ENCODE measurements at regions of chrX and their contacts with region 1.

Region 1: DNA sequence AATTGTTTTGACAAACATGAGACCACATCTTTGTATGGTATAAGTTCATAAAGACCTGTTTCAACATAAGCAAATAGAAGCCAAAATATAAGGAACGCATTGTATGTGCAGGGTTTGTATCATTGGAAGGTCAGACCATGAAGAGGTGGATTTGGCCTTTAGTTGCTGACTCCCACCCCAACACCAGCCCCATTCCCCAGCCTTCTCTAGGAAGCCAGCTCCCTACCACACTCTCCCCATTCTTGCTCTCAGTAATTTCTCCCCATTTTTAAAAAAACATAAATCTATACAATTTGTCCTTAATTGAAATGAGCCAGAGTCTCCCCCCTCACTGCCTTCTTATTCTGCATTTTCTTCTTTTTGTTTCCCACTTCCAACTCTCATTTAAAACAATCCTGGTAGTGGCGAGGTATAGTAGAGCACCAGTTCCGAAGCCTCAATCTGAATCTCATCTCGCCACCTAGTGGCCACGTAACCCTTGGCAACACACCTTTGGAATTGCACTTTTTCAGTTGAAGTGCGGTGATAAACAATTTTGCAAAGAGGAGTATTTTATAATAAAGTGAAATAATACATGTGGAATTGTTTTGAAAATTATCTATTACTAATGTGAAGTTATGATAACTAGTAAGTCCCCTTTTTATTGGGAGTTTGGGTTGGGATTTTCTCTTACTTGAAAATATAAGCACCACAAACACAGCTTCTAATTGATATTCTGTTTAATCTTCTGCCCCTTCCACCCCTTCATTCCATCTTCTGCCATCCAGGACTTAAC is 126.6 kb downstream of the ASB9 start:
- DNase-seq: peak in 1 of 2 experiments; percentile 47
- H3K4me3 ChIP-seq: no peak overlapping the region
- H3K27ac ChIP-seq: no peak overlapping the region
- H3K4me1 ChIP-seq: no peaks in the 10 kb centered on the region
- H3K27me3 ChIP-seq: no peaks in the 10 kb centered on the region
- CTCF ChIP-seq: peak; percentile 41 to 62 (median 54)
- EP300 ChIP-seq: no peak
- POLR2A ChIP-seq: no peak
- RAD21 ChIP-seq: peak; percentile 69

Region 2: DNA sequence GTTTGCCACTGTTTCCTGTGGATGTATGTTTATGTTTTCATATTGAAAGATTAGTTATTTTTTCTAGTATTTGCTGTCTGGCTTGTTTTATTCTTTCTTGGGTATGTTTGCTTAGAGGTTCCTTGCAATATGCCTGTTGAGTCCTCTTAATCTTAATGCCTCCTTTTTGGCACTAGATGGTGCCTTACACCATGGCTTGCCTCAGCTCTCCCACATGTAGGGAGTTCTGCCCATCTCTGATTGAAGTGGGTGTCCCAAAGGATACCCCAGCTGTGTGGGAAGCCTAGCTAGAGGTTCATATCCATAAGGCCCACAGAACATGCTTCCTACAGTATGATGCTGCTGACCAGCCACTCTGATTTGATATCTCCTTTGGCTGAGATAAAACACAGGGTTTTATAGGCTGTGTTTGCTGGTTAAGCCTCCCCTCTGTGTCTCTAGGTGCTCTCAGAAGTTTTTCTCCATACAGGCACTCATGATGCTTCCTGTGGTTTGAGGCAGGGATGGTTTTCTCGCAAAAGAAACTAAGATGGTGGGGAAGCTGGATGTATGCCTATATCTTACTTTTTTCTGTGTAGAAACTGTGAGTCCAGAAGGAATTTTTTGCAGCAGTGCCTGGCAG is 35.8 kb before region 1 on chrX:
- CTCF ChIA-PET with region 1: interaction called, 13 read pairs
- POLR2A ChIA-PET with region 1: no interaction called
- DNase-seq: no peak
- H3K4me3 ChIP-seq: no peak overlapping the region
- H3K27ac ChIP-seq: no peak overlapping the region
- H3K4me1 ChIP-seq: no peaks in the 10 kb centered on the region
- H3K27me3 ChIP-seq: no peaks in the 10 kb centered on the region
- CTCF ChIP-seq: peak in 2 of 3 experiments; percentile 26 to 29; a peak in 2 of 4 replicates
- EP300 ChIP-seq: no peak
- POLR2A ChIP-seq: no peak
- RAD21 ChIP-seq: peak; percentile 49 to 66

Region 3: DNA sequence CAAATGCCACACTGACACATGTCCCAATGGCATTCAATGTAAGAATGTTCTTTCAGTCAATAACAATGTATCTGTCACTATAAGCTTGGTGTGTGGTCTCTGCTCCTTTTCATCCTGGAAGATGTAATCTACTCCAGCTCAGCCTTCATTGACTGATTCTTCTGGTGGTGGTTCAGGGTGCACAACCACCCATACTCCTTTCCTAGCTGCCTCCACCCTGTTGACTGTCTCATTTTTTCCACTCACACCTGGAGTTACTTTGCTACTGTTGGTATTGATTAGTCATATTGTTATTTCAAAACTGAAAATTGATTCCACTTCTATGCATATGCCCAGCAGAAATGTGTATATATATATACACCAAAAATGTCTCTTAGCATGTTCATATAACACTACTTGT is 13.8 kb before region 1 on chrX:
- CTCF ChIA-PET with region 1: interaction called, 12 read pairs
- POLR2A ChIA-PET with region 1: no interaction called
- DNase-seq: no peak
- H3K4me3 ChIP-seq: no peak overlapping the region
- H3K27ac ChIP-seq: no peak overlapping the region
- H3K4me1 ChIP-seq: no peaks in the 10 kb centered on the region
- H3K27me3 ChIP-seq: no peaks in the 10 kb centered on the region
- CTCF ChIP-seq: no peak
- EP300 ChIP-seq: no peak
- POLR2A ChIP-seq: no peak
- RAD21 ChIP-seq: no peak